Prostate gland (tissue), 2 donors: ENCODE measurements at regions of chr10 and their contacts with region 1.

Region 1: GRCh38 chr10:132536971-132537712 is 445 bp upstream of the INPP5A start:
- DNase-seq: peak; percentile 100
- H3K4me3 ChIP-seq: peak overlapping the region; percentile 68 to 74
- H3K27ac ChIP-seq: peak overlapping the region; percentile 91 to 94
- H3K4me1 ChIP-seq: peaks cover 13% of the 10 kb centered on the region
- H3K27me3 ChIP-seq: no peaks in the 10 kb centered on the region
- CTCF ChIP-seq: peak; percentile 15 to 59 (median 36)
- POLR2A ChIP-seq: peak; percentile 78

Region 2: GRCh38 chr10:132516771-132517725 is 20.1 kb before region 1 on chr10:
- intact Hi-C with region 1: loop called (anchors 1 kb)
- DNase-seq: peak; percentile 63
- H3K4me3 ChIP-seq: no peak overlapping the region
- H3K27ac ChIP-seq: peak overlapping the region; percentile 51 to 78
- H3K4me1 ChIP-seq: peaks cover 10% of the 10 kb centered on the region
- H3K27me3 ChIP-seq: no peaks in the 10 kb centered on the region
- CTCF ChIP-seq: no peak
- POLR2A ChIP-seq: peak; percentile 21

Region 3: GRCh38 chr10:132575356-132576201 is 38.4 kb after region 1 on chr10:
- intact Hi-C with region 1: loop called (anchors 5 kb)
- DNase-seq: peak; percentile 92
- H3K4me3 ChIP-seq: peak overlapping the region in 1 of 2 donors; percentile 1
- H3K27ac ChIP-seq: peak overlapping the region; percentile 90 to 94
- H3K4me1 ChIP-seq: peaks cover 46% of the 10 kb centered on the region
- H3K27me3 ChIP-seq: no peaks in the 10 kb centered on the region
- CTCF ChIP-seq: no peak
- POLR2A ChIP-seq: no peak

Region 4: GRCh38 chr10:132637477-132638129 is 100.5 kb after region 1 on chr10:
- intact Hi-C with region 1: loop called (anchors 2 kb)
- DNase-seq: peak; percentile 39
- H3K4me3 ChIP-seq: no peak overlapping the region
- H3K27ac ChIP-seq: no peak overlapping the region
- H3K4me1 ChIP-seq: peaks cover 10% of the 10 kb centered on the region
- H3K27me3 ChIP-seq: no peaks in the 10 kb centered on the region
- CTCF ChIP-seq: peak; percentile 39 to 87 (median 78)
- POLR2A ChIP-seq: no peak

Region 5: DNA sequence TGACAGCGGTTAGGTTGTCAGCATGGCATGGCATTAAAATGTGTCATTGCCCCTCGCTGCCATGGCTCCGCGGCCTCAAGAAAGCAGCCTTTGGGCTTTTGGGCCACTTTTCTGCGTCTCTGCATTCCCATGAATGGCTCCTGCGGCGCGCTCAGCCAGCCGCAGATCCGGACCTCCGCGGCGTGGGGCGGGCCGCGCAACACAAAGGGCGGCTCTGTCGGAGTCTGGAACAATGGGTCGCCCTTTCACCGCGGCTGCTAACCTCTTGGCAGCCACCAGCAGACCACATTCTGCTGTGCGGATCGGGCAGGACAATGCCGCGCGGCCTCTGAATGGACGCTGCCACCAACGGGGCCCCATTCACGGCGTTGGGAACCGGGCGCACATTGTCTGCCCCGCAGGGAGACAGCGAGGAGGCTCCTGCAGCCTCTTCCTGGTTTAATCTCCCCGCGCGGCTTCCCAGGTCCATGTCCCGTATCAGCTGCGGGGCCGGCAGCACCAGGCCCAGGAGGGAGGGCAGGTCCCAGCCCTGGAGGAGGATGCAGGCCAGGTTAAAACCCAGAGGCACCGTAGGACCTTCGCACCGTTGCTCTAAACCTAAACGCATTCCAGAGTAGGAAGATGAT is 177.1 kb after region 1 on chr10:
- intact Hi-C with region 1: no loop called
- DNase-seq: no peak
- H3K4me3 ChIP-seq: no peak overlapping the region
- H3K27ac ChIP-seq: no peak overlapping the region
- H3K4me1 ChIP-seq: no peaks in the 10 kb centered on the region
- H3K27me3 ChIP-seq: no peaks in the 10 kb centered on the region
- CTCF ChIP-seq: no peak
- POLR2A ChIP-seq: no peak